Endothelial cell of umbilical vein (primary cell): ENCODE measurements at regions of chr6 and their contacts with region 1.

Region 1: DNA sequence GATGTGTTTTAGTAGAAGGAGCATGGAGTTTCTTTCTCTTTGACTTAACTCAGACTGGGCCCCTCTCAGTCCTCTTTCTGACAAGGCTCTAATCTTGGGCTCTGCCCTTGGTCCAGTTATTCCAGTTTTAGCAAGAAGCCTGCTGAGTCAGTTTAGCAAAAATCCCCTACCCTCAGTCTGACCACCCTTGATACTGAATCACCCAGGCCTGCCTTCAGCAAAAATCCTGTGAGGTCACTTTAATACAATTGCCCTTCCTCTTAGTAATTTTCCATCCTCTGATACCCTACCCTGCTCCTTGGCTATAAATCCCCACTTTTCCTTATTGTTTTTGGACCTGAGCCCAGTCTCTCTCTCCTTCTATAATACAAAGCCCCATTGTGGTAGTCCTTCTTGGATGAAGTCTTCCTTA is 326.7 kb upstream of the NOX3 start:
- DNase-seq: peak; percentile 98
- H3K4me3 ChIP-seq: no peak overlapping the region
- H3K27ac ChIP-seq: peak overlapping the region; percentile 90
- H3K4me1 ChIP-seq: peaks cover 18% of the 10 kb centered on the region
- H3K27me3 ChIP-seq: no peaks in the 10 kb centered on the region
- CTCF ChIP-seq: no peak
- POLR2A ChIP-seq: no peak

Region 2: GRCh38 chr6:155765275-155766194 is 16.8 kb before region 1 on chr6:
- CTCF ChIA-PET with region 1: interaction called, 6 read pairs
- POLR2A ChIA-PET with region 1: no interaction called
- dilution Hi-C with region 1: no loop called
- intact Hi-C with region 1: loop called (anchors 1 kb)
- DNase-seq: peak; percentile 71
- H3K4me3 ChIP-seq: no peak overlapping the region
- H3K27ac ChIP-seq: peak overlapping the region; percentile 54
- H3K4me1 ChIP-seq: peaks cover 19% of the 10 kb centered on the region
- H3K27me3 ChIP-seq: no peaks in the 10 kb centered on the region
- CTCF ChIP-seq: no peak
- POLR2A ChIP-seq: no peak

Region 3: DNA sequence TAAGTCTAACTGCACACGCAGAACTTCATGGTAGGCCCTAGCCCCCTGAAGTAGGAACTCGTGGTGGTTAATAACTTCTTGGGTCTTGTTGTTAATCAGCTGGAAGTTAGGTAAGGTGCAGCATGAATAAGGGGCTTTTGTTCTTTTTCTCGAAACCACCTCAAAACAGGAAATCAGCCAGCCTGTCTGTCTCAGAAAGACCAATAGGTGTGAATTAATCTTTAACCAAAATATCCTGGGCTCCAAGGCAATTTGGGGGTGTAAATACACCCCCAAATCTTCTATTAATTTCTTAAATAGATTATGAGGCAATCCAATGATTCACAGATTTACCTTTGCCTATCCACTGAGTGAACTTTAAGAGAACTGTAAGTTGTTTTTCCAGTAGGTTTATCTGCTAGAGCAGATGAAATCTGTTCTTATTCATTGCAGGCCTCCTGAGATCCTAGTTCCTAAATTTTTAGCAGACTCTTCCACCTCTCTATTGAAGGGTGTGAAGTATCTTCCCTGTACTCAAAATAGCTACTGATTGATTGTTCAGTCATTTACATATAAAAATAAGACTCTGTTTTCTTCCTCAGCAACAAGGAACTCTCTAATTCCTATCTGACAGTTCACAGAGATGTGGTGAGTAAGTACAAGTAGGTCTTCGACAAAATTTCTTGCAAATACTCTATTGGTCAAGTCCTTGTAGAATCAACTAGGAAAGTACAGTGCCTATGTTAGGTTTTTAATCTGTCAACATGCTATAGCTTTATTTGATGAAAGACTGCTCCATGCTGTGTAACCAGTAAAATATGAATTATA is 100.4 kb after region 1 on chr6:
- CTCF ChIA-PET with region 1: interaction called, 3 read pairs
- POLR2A ChIA-PET with region 1: no interaction called
- dilution Hi-C with region 1: no loop called
- intact Hi-C with region 1: loop called (anchors 1 kb)
- DNase-seq: peak; percentile 60
- H3K4me3 ChIP-seq: no peak overlapping the region
- H3K27ac ChIP-seq: peak overlapping the region; percentile 53
- H3K4me1 ChIP-seq: peaks cover 43% of the 10 kb centered on the region
- H3K27me3 ChIP-seq: no peaks in the 10 kb centered on the region
- CTCF ChIP-seq: no peak
- POLR2A ChIP-seq: no peak